Common myeloid progenitor, CD34-positive (primary cell): ENCODE measurements at regions of chr17 and their contacts with region 1.

Region 1: GRCh38 chr17:77331301-77331864 is 190.6 kb downstream of the SEC14L1 start:
- DNase-seq: peak; percentile 88 to 95 (median 94)
- H3K4me3 ChIP-seq: peak overlapping the region in 5 of 7 experiments; percentile 27 to 69 (median 54)
- H3K27ac ChIP-seq: no peak overlapping the region
- H3K4me1 ChIP-seq: peaks cover 3 to 57% (median 23%) of the 10 kb centered on the region in 4 experiments
- H3K27me3 ChIP-seq: no peaks in the 10 kb centered on the region

Region 2: GRCh38 chr17:77363821-77364361 is 32.5 kb after region 1 on chr17:
- CTCF ChIA-PET with region 1: interaction called, 10 read pairs
- POLR2A ChIA-PET with region 1: no interaction called
- DNase-seq: peak in 2 of 3 donors; percentile 56 to 64
- H3K4me3 ChIP-seq: no peak overlapping the region
- H3K27ac ChIP-seq: no peak overlapping the region
- H3K4me1 ChIP-seq: peaks cover 0 to 57% (median 33%) of the 10 kb centered on the region in 4 experiments
- H3K27me3 ChIP-seq: no peaks in the 10 kb centered on the region

Region 3: GRCh38 chr17:77459018-77459755 is 127.8 kb after region 1 on chr17:
- CTCF ChIA-PET with region 1: interaction called, 3 read pairs
- POLR2A ChIA-PET with region 1: interaction called, 10 read pairs
- DNase-seq: no peak
- H3K4me3 ChIP-seq: no peak overlapping the region
- H3K27ac ChIP-seq: peak overlapping the region in 1 of 2 experiments; percentile 2
- H3K4me1 ChIP-seq: peaks cover 18 to 94% (median 88%) of the 10 kb centered on the region in 4 experiments
- H3K27me3 ChIP-seq: no peaks in the 10 kb centered on the region

Region 4: DNA sequence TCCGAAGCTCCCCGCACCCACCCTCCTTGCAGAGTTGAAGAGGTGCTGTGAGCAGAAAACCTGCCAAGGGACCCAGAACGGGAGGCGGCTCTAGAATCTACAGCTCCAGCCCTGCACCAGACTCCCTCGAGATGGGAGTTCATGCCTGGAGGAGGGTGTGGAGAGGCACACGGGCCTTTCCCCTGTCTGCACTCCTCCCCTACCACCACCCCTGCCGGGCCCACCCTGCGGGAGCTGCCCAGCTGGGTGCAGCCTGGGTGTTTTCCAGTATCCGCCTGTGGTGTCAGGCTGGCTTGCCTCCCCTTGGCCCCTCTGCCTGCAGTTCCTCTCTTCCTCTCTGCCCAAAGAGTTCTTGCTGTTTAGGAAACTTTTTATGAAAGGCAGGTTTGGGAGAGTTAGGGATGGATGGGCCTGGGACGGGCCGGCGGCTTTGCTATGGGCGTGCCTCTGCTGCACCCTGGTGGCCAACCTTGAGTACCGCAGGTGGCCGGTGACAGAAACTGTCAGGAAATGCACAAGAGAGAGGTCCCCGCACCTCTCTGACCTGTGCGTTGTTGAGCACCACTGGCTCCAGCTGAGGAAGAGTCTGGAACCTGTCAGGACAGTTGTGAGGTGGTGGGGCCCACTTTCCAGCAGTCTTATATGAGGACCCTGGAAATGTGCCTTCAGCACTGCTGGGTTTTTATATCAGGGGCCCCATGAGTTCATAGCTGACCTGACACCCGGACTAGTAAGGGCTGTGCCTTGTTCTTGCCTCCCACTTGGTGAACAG is 163.5 kb after region 1 on chr17:
- CTCF ChIA-PET with region 1: interaction called, 33 read pairs
- POLR2A ChIA-PET with region 1: no interaction called
- DNase-seq: peak; percentile 56 to 73 (median 60)
- H3K4me3 ChIP-seq: no peak overlapping the region
- H3K27ac ChIP-seq: no peak overlapping the region
- H3K4me1 ChIP-seq: peaks cover 0 to 10% (median under 1%) of the 10 kb centered on the region in 4 experiments
- H3K27me3 ChIP-seq: no peaks in the 10 kb centered on the region